ENCODE measurements at regions of chr3 and their contacts with region 1.

Region 1: GRCh38 chr3:102038477-102039142 is 189.3 kb downstream of the NFKBIZ start:
- DNase-seq: no peak
- ATAC-seq: no peak
- H3K4me3 ChIP-seq: no peak overlapping the region
- H3K4me3 Mint-ChIP-seq: no peak overlapping the region
- H3K27ac ChIP-seq: no peak overlapping the region
- H3K27ac Mint-ChIP-seq: no peak overlapping the region
- H3K4me1 ChIP-seq: no peaks in the 10 kb centered on the region
- H3K4me1 Mint-ChIP-seq: peaks cover 5 to 10% (median 10%) of the 10 kb centered on the region in 3 donors
- H3K27me3 ChIP-seq: no peaks in the 10 kb centered on the region
- H3K27me3 Mint-ChIP-seq: no peaks in the 10 kb centered on the region

Region 2: DNA sequence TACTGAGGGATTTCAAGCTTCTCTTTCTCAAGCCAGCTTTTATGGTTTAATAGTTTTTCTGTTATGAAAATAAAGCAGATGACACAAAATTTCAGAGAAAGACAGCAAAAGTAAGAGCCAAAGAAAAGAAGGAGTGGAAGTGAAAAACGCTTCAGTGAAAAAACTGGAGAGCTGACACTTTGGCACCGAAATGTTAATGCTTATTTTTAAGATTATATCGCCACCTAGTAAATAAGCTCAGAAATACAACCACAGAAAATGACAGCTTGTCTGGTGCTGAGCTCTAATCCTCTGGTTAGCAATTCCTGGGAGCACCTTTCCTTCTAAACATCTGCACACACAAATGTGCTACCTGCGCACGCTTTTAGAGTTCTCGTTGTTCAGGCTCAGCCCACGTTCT is 497.8 kb after region 1 on chr3:
- CTCF ChIA-PET with region 1: interaction called in 1 of 2 experiments, 13 read pairs
- POLR2A ChIA-PET with region 1: no interaction called
- DNase-seq: peak in 1 of 35 experiments; percentile 41
- ATAC-seq: peak in 1 of 4 experiments; percentile 54
- H3K4me3 ChIP-seq: no peak overlapping the region
- H3K4me3 Mint-ChIP-seq: no peak overlapping the region
- H3K27ac ChIP-seq: no peak overlapping the region
- H3K27ac Mint-ChIP-seq: no peak overlapping the region
- H3K4me1 ChIP-seq: no peaks in the 10 kb centered on the region
- H3K4me1 Mint-ChIP-seq: peaks cover 0 to 9% (median 0%) of the 10 kb centered on the region in 3 donors
- H3K27me3 ChIP-seq: no peaks in the 10 kb centered on the region
- H3K27me3 Mint-ChIP-seq: peaks cover 9 to 12% of the 10 kb centered on the region in 2 donors

Measured in T-cell (primary cell).